Mammary epithelial cell (primary cell): ENCODE measurements at regions of chr2 and their contacts with region 1.

Region 1: GRCh38 chr2:217510771-217511291 is 492.0 kb downstream of the TNS1 start:
- DNase-seq: peak; percentile 68
- H3K4me3 ChIP-seq: no peak overlapping the region
- H3K27ac ChIP-seq: no peak overlapping the region
- H3K4me1 ChIP-seq: peaks cover 5% of the 10 kb centered on the region
- H3K27me3 ChIP-seq: no peaks in the 10 kb centered on the region
- CTCF ChIP-seq: peak; percentile 64 to 79

Region 2: GRCh38 chr2:216519154-216519762 is 991.6 kb before region 1 on chr2:
- CTCF ChIA-PET with region 1: no interaction called
- dilution Hi-C with region 1: no loop called
- in situ Hi-C with region 1: loop called in 1 of 2 experiments (anchors 10 kb)
- intact Hi-C with region 1: loop called (anchors 2 kb)
- DNase-seq: peak; percentile 70
- H3K4me3 ChIP-seq: no peak overlapping the region
- H3K27ac ChIP-seq: no peak overlapping the region
- H3K4me1 ChIP-seq: peaks cover 15% of the 10 kb centered on the region
- H3K27me3 ChIP-seq: no peaks in the 10 kb centered on the region
- CTCF ChIP-seq: peak; percentile 72 to 78

Region 3: GRCh38 chr2:216877084-216877483 is 633.7 kb before region 1 on chr2:
- CTCF ChIA-PET with region 1: no interaction called
- dilution Hi-C with region 1: no loop called
- in situ Hi-C with region 1: no loop called
- intact Hi-C with region 1: loop called (anchors 1 kb)
- DNase-seq: no peak
- H3K4me3 ChIP-seq: no peak overlapping the region
- H3K27ac ChIP-seq: no peak overlapping the region
- H3K4me1 ChIP-seq: no peaks in the 10 kb centered on the region
- H3K27me3 ChIP-seq: no peaks in the 10 kb centered on the region
- CTCF ChIP-seq: peak; percentile 37 to 55

Region 4: GRCh38 chr2:217166241-217166850 is 344.5 kb before region 1 on chr2:
- CTCF ChIA-PET with region 1: no interaction called
- dilution Hi-C with region 1: loop called (anchors 25 kb)
- in situ Hi-C with region 1: loop called in 1 of 2 experiments (anchors 25 kb)
- intact Hi-C with region 1: loop called (anchors 1 kb)
- DNase-seq: peak; percentile 27
- H3K4me3 ChIP-seq: no peak overlapping the region
- H3K27ac ChIP-seq: no peak overlapping the region
- H3K4me1 ChIP-seq: peaks cover 8% of the 10 kb centered on the region
- H3K27me3 ChIP-seq: no peaks in the 10 kb centered on the region
- CTCF ChIP-seq: peak; percentile 57 to 69

Region 5: GRCh38 chr2:217370391-217370790 is 140.4 kb before region 1 on chr2:
- CTCF ChIA-PET with region 1: interaction called, 5 read pairs
- dilution Hi-C with region 1: no loop called
- in situ Hi-C with region 1: loop called in 1 of 2 experiments (anchors 10 kb)
- intact Hi-C with region 1: loop called (anchors 1 kb)
- DNase-seq: peak; percentile 96
- H3K4me3 ChIP-seq: no peak overlapping the region
- H3K27ac ChIP-seq: no peak overlapping the region
- H3K4me1 ChIP-seq: peaks cover 37% of the 10 kb centered on the region
- H3K27me3 ChIP-seq: no peaks in the 10 kb centered on the region
- CTCF ChIP-seq: peak; percentile 16 to 51

Region 6: DNA sequence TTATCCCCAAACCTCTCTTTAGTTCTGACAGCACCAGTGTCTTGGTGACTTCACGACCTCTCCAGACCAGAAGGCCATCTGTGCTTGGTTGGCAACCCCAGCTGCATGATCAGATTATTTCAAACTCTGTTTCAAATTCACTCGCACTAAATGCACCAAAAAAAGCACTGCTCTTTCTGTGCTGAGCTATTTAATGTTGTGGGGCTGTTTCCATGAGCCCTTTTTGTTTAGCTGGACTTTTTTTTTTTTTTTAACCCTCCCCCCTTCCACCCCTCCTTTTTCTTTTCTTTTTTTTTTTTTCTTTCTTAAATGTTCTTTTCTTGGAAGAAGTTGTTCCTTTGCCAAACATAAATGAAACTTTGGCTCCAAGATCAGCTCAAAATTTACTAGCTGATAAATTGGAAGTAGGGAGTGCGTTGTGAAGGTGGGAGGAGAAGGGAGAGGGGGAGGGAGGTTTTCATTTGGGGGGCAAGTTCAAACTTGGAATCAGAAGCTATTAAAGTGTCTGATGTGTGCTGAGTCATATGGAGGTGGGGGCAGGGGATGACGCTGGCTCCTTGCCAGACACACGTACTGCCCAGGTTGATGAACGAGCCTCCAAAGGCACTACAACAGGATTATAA is 108.0 kb before region 1 on chr2:
- CTCF ChIA-PET with region 1: no interaction called
- dilution Hi-C with region 1: no loop called
- in situ Hi-C with region 1: no loop called
- intact Hi-C with region 1: no loop called
- DNase-seq: peak; percentile 81
- H3K4me3 ChIP-seq: no peak overlapping the region
- H3K27ac ChIP-seq: peak overlapping the region; percentile 33
- H3K4me1 ChIP-seq: peaks cover 29% of the 10 kb centered on the region
- H3K27me3 ChIP-seq: no peaks in the 10 kb centered on the region
- CTCF ChIP-seq: no peak

Region 7: DNA sequence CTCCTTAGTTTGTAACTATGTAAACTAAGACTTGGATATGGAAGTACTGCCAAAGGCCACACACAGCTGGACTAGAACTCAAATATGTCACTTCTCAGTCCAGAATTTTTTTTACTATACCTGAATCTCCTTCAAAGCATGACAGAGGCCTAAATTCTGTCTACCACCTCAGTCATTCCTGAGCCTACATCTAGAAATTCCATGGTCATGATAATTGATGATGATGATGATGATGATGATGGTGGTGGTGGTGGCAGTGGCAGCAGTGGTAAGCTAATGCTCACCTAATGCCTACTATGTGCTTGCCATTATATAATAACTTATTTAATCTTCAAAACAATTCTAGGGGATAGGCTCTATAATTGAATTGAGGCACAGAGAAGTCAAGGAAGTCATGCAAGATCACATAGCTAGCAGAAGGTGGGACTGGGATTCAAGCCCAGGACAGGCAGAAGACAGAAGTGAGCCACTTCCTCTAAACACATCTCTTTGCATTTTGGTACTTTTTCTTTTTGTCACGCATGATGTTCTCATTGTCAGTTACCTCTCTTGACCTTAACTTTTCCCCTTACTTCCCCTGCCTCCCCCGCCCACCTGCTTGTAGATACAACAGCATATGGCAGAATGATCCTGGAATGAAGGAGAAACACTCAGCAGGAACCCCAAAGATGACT is 47.3 kb before region 1 on chr2:
- CTCF ChIA-PET with region 1: no interaction called
- dilution Hi-C with region 1: no loop called
- in situ Hi-C with region 1: no loop called
- intact Hi-C with region 1: loop called (anchors 1 kb)
- DNase-seq: no peak
- H3K4me3 ChIP-seq: no peak overlapping the region
- H3K27ac ChIP-seq: no peak overlapping the region
- H3K4me1 ChIP-seq: no peaks in the 10 kb centered on the region
- H3K27me3 ChIP-seq: no peaks in the 10 kb centered on the region
- CTCF ChIP-seq: no peak